Common myeloid progenitor, CD34-positive (primary cell): ENCODE measurements at regions of chr13 and their contacts with region 1.

Region 1: DNA sequence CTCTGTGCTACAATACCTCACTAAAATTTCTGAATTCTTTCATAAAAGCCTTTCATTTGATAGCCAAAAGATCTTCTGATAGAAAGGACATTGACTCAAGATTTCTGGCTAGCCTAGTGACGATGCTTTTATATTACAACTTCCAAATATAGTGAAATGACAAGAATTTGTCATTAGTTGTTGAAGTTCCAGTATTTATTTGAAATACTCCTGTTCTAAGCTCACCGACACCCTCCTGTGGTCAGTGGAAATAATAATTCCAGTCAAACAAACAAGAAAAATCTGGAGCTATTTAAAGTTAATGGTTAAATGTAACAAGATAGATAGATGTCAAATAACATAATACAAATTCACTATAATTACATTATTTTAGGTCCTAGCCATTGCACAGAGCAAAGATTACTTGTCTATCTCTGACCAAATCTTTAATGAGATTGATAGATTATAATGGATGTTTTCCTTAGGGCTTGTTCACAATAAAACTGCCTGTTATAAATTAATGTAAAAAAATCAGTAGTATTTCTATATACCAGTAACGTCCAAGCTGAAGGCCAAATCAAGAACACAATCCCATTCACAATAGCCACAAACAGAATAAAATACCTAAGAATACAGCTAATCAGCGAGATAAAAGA is 195.5 kb downstream of the RGCC start:
- DNase-seq: peak; percentile 55 to 79 (median 73)
- H3K4me3 ChIP-seq: no peak overlapping the region
- H3K27ac ChIP-seq: no peak overlapping the region
- H3K4me1 ChIP-seq: peaks cover 0 to 7% (median 0%) of the 10 kb centered on the region in 4 experiments
- H3K27me3 ChIP-seq: no peaks in the 10 kb centered on the region

Region 2: GRCh38 chr13:41384755-41385503 is 267.9 kb before region 1 on chr13:
- CTCF ChIA-PET with region 1: interaction called, 38 read pairs
- POLR2A ChIA-PET with region 1: no interaction called
- DNase-seq: peak; percentile 12 to 24 (median 22)
- H3K4me3 ChIP-seq: no peak overlapping the region
- H3K27ac ChIP-seq: no peak overlapping the region
- H3K4me1 ChIP-seq: peaks cover 0 to 16% (median 5%) of the 10 kb centered on the region in 4 experiments
- H3K27me3 ChIP-seq: no peaks in the 10 kb centered on the region

Region 3: GRCh38 chr13:41411522-41411921 is 241.3 kb before region 1 on chr13:
- CTCF ChIA-PET with region 1: interaction called, 13 read pairs
- POLR2A ChIA-PET with region 1: no interaction called
- DNase-seq: peak; percentile 31 to 56 (median 40)
- H3K4me3 ChIP-seq: no peak overlapping the region
- H3K27ac ChIP-seq: no peak overlapping the region
- H3K4me1 ChIP-seq: no peaks in the 10 kb centered on the region
- H3K27me3 ChIP-seq: no peaks in the 10 kb centered on the region

Region 4: DNA sequence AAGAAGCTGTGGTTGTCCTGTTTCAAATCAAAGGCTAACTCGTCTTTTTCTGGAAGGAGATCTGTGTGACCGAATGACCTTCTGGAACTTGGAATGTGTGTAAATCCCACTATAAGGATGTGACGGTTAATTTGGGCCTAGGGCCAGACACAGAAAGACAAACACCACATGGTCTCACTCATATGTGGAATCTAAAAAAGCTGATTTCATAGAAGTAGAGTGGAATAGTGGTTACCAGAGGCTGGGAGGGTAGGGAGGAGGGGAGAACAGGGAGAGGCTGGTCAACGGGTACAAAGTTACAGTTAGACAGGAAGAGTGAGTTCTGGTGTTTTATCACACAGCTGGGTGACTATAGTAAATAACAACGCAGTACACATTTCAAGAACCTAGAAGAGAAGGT is 234.8 kb before region 1 on chr13:
- CTCF ChIA-PET with region 1: interaction called, 13 read pairs
- POLR2A ChIA-PET with region 1: no interaction called
- DNase-seq: no peak
- H3K4me3 ChIP-seq: no peak overlapping the region
- H3K27ac ChIP-seq: no peak overlapping the region
- H3K4me1 ChIP-seq: no peaks in the 10 kb centered on the region
- H3K27me3 ChIP-seq: no peaks in the 10 kb centered on the region

Region 5: GRCh38 chr13:41668130-41668757 is 15.4 kb after region 1 on chr13:
- CTCF ChIA-PET with region 1: interaction called, 11 read pairs
- POLR2A ChIA-PET with region 1: no interaction called
- DNase-seq: peak; percentile 83 to 93 (median 92)
- H3K4me3 ChIP-seq: no peak overlapping the region
- H3K27ac ChIP-seq: no peak overlapping the region
- H3K4me1 ChIP-seq: no peaks in the 10 kb centered on the region
- H3K27me3 ChIP-seq: no peaks in the 10 kb centered on the region